GM18951 (cell line): ENCODE measurements at regions of chr12 and their contacts with region 1.

Region 1: GRCh38 chr12:66409195-66409871 is 107.0 kb downstream of the HELB start:
- POLR2A ChIP-seq: no peak

Region 2: DNA sequence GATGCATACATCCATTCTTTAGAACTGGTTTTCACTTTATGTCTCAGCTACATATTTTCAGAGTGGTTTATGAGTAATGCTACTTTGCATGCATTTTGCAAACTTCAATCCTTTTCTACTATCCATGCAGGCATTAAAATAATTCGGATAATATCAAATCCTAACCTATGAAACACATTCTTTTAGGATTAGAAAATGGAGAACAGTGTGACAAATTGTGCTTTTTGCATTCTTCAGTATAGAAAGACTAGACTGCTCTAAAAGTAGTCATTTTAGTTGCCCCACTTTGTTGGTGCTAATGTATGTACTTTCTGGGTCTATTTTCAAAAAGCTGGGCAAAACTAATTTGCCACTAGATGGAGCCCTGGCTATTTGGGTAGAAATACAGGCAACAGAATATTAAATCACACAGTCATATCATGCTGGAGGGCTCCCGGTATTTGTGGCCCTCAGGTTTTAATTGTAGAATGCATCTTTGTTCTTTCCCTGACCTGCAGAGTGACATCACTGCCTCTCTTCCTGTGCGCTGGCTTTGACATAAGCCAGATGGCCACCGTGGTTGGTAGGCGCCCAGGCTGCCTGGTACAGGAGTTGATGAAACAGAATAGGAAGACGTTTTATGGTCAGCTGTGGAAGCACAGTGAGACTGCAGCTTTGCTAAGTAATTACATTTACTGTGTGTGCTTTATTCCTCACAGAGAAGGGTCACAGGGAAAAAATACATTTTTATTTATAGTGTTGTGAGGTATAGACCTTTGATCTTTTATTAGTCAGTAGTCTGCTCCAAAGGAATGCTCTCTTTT is 1102.8 kb before region 1 on chr12:
- in situ Hi-C with region 1: loop called (anchors 25 kb)
- POLR2A ChIP-seq: no peak

Region 3: GRCh38 chr12:65585648-65586602 is 823.4 kb before region 1 on chr12:
- in situ Hi-C with region 1: loop called (anchors 25 kb)
- POLR2A ChIP-seq: no peak

Region 4: DNA sequence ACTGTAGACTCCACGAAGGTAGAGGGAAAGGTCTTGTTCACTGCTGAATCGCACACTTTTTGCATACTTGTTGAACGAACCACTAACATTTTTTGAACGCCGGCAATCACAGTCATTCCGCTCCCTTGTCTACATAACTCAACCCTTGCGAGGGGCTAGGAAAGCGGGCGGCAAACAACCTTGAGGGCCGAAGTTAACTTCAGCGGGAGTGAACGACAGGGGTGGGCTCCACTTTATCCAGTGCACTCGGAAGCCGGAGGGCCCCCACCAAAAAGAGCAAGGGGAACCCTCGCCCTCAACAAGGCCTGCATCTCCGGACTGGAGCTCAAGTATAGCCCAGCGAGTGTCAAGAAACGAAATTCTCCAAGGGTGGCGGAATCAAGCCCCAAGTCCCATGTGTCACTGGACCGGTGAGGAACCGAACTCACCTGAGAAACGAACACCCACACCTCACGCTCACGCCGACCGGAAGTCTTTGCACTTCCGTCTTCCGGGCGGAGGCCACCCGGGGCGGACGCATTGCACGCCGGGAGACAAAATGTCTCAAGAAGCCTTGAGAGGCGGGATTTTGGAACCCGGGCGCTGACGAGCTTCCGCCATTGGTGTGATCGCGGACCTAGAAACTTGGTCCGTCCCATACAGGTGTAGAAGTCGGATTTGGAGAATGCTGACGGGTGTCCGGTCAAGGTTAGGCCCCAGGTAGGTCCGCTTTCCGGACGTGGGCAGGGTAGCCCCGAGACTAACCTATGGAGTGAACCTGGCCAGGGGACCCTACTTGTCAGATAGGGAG is 278.9 kb before region 1 on chr12 and contains the start of gene LLPH:
- in situ Hi-C with region 1: loop called (anchors 25 kb)
- POLR2A ChIP-seq: peak; percentile 90